Activated T-helper 2 cell treated with anti-CD3 and anti-CD28 coated beads, Interferon-gamma antibody, Interleukin-2, Interleukin-4, amounts not matched to agents 10 μg/mL and 5 μg/mL and 100 μg/mL, durations not matched to agents 14 hours and 24 hours and 36 hours (primary cell): ENCODE measurements at regions of chr5 and their contacts with region 1.

Region 1: DNA sequence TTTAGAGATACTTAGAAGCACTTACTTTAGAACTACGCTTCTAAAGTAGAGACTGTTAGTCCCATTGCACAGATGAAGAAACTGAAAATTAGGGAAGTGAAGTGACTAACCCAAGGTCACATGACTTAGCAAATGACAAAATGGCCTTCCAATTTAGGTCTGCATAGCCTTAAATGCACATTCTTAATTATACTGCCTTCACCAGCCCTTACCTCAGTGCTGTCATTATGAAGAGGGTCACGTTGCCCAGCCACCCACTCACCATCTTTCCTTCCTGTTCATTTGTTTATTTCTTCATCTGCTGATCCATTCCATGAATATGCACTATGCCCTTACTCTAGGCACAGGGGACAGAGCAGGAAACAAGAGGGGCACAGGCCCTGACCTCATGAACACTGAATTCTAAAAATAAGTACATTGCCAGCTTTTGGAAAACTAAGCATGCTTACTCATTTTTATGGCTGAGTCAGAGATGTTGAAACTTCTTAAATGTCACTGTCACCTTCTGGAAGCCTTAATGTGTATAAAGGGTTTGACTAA is 8.6 kb downstream of the HAVCR2 start:
- DNase-seq: no peak
- H3K4me3 Mint-ChIP-seq: peak overlapping the region; percentile 10
- H3K27ac Mint-ChIP-seq: peak overlapping the region; percentile 94
- H3K4me1 Mint-ChIP-seq: peaks cover 30% of the 10 kb centered on the region
- H3K27me3 Mint-ChIP-seq: no peaks in the 10 kb centered on the region

Region 2: GRCh38 chr5:157033071-157033583 is 67.1 kb before region 1 on chr5:
- intact Hi-C with region 1: loop called (anchors 1 kb)
- DNase-seq: no peak
- H3K4me3 Mint-ChIP-seq: no peak overlapping the region
- H3K27ac Mint-ChIP-seq: peak overlapping the region; percentile 80
- H3K4me1 Mint-ChIP-seq: peaks cover 65% of the 10 kb centered on the region
- H3K27me3 Mint-ChIP-seq: no peaks in the 10 kb centered on the region

Region 3: GRCh38 chr5:157076558-157076957 is 23.7 kb before region 1 on chr5:
- intact Hi-C with region 1: loop called (anchors 2 kb)
- DNase-seq: no peak
- H3K4me3 Mint-ChIP-seq: no peak overlapping the region
- H3K27ac Mint-ChIP-seq: no peak overlapping the region
- H3K4me1 Mint-ChIP-seq: peaks cover 37% of the 10 kb centered on the region
- H3K27me3 Mint-ChIP-seq: no peaks in the 10 kb centered on the region

Region 4: GRCh38 chr5:157142317-157143126 is 42.3 kb after region 1 on chr5 and contains the start of gene MED7:
- intact Hi-C with region 1: loop called (anchors 2 kb)
- DNase-seq: peak; percentile 95
- H3K4me3 Mint-ChIP-seq: peak within 1 kb of the TSS; percentile 97
- H3K27ac Mint-ChIP-seq: peak within 1 kb of the TSS; percentile 97
- H3K4me1 Mint-ChIP-seq: peaks cover 31% of the 10 kb centered on the region
- H3K27me3 Mint-ChIP-seq: no peaks in the 10 kb centered on the region
- total RNA-seq, gene MED7: 12.5 and 13.1 TPM in 2 replicates